HepG2 (cell line): ENCODE measurements at regions of chr11 and their contacts with region 1.

Region 1: GRCh38 chr11:33835143-33835878 is 56.6 kb downstream of the LMO2 start:
- DNase-seq: peak; percentile 33
- ATAC-seq: no peak
- H3K4me3 ChIP-seq: no peak overlapping the region
- H3K27ac ChIP-seq: no peak overlapping the region
- H3K4me1 ChIP-seq: no peaks in the 10 kb centered on the region
- H3K27me3 ChIP-seq: peaks cover 0 to 27% of the 10 kb centered on the region in 2 experiments; a peak in 3 of 5 replicates
- CTCF ChIP-seq: peak; percentile 25
- EP300 ChIP-seq: no peak
- POLR2A ChIP-seq: no peak
- RAD21 ChIP-seq: no peak

Region 2: GRCh38 chr11:33808228-33808828 is 27.0 kb before region 1 on chr11:
- CTCF ChIA-PET with region 1: interaction called, 9 read pairs
- POLR2A ChIA-PET with region 1: no interaction called
- in situ Hi-C with region 1: no loop called
- intact Hi-C with region 1: loop called (anchors 1 kb)
- DNase-seq: peak; percentile 63
- ATAC-seq: peak; percentile 98
- H3K4me3 ChIP-seq: no peak overlapping the region
- H3K27ac ChIP-seq: no peak overlapping the region
- H3K4me1 ChIP-seq: no peaks in the 10 kb centered on the region
- H3K27me3 ChIP-seq: peaks cover 2 to 15% of the 10 kb centered on the region in 2 experiments; a peak in 3 of 5 replicates
- CTCF ChIP-seq: peak; percentile 87
- EP300 ChIP-seq: no peak
- POLR2A ChIP-seq: no peak
- RAD21 ChIP-seq: peak; percentile 63; the same call in 1 of the 2 replicates

Region 3: DNA sequence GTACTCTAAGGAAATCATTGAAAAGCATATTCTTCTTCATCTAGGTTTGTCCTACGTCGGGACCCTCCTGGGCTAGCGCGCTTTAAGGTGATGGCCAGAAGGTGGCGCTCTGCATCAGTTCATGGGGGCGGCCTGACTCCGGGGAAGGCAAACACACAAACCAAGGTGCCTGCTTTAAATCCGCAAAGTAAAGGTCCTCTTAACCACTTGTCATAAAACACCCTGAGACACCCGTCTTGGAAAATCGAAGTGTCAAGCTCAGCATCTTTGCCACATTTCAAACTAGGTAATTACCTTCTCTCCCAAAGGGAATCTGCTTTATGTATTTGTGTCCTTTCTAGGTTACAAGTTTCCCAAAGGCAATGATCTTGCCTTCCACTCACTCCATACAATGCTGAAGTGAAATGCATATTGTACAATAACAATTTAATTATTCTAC is 22.6 kb after region 1 on chr11:
- CTCF ChIA-PET with region 1: no interaction called
- POLR2A ChIA-PET with region 1: no interaction called
- in situ Hi-C with region 1: no loop called
- intact Hi-C with region 1: no loop called
- DNase-seq: peak; percentile 31
- ATAC-seq: peak; percentile 88
- H3K4me3 ChIP-seq: no peak overlapping the region
- H3K27ac ChIP-seq: no peak overlapping the region
- H3K4me1 ChIP-seq: no peaks in the 10 kb centered on the region
- H3K27me3 ChIP-seq: peaks cover 5 to 52% of the 10 kb centered on the region in 2 experiments
- CTCF ChIP-seq: peak; percentile 86
- EP300 ChIP-seq: no peak
- POLR2A ChIP-seq: no peak
- RAD21 ChIP-seq: peak; percentile 77

Region 4: GRCh38 chr11:33970984-33971466 is 135.7 kb after region 1 on chr11:
- CTCF ChIA-PET with region 1: interaction called, 6 read pairs
- POLR2A ChIA-PET with region 1: no interaction called
- in situ Hi-C with region 1: no loop called
- intact Hi-C with region 1: loop called (anchors 1 kb)
- DNase-seq: peak; percentile 46
- ATAC-seq: peak; percentile 97
- H3K4me3 ChIP-seq: no peak overlapping the region
- H3K27ac ChIP-seq: no peak overlapping the region
- H3K4me1 ChIP-seq: peaks cover 7% of the 10 kb centered on the region; the same call in 1 of the 2 replicates
- H3K27me3 ChIP-seq: peaks cover 2 to 10% of the 10 kb centered on the region in 2 experiments; a peak in 3 of 5 replicates
- CTCF ChIP-seq: peak; percentile 84
- EP300 ChIP-seq: no peak
- POLR2A ChIP-seq: no peak
- RAD21 ChIP-seq: peak; percentile 66

Region 5: GRCh38 chr11:33987975-33988580 is 152.8 kb after region 1 on chr11:
- CTCF ChIA-PET with region 1: interaction called, 3 read pairs
- POLR2A ChIA-PET with region 1: no interaction called
- in situ Hi-C with region 1: no loop called
- intact Hi-C with region 1: loop called (anchors 1 kb)
- DNase-seq: peak; percentile 72
- ATAC-seq: peak; percentile 94
- H3K4me3 ChIP-seq: no peak overlapping the region
- H3K27ac ChIP-seq: no peak overlapping the region
- H3K4me1 ChIP-seq: no peaks in the 10 kb centered on the region
- H3K27me3 ChIP-seq: no peaks in the 10 kb centered on the region
- CTCF ChIP-seq: peak; percentile 68
- EP300 ChIP-seq: no peak
- POLR2A ChIP-seq: no peak
- RAD21 ChIP-seq: peak; percentile 31; the same call in 1 of the 2 replicates